ENCODE measurements at regions of chr15 and their contacts with region 1.

Region 1: DNA sequence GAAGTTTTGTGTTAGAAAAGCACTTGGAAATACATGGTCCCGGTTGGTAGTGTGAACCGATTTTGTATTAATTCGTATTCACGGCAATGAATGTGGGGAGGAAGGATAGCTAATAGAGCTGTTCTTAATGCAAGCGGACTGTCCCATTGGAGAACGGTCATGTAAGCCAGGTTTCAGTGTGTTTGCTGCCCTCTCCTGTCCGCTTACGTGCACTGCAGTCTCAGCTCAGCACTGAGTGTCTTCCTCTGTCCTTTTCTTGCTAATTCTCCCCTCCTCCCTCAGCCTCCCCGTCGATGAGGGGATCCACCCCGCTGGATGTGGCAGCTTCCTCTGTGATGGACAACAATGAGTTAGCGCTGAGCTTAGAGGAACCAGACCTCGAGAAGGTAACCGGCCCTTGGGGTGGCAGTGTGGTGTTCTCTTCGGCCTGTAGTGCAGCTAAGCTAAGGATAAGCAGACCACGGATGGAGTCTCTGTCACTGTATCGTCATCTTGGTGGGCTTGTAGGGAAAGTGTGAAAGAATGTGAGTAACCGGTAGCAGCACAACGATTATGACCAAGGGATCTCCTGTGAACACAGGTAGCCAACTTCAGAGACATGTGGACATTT is 267.5 kb upstream of the CHRM5 start:
- DNase-seq: peak; percentile 59 to 75 (median 71)
- ATAC-seq: peak; percentile 98
- H3K4me3 ChIP-seq: no peak overlapping the region
- H3K27ac ChIP-seq: no peak overlapping the region
- H3K4me1 ChIP-seq: no peaks in the 10 kb centered on the region
- H3K27me3 ChIP-seq: peaks cover 0 to 4% of the 10 kb centered on the region in 2 experiments; a peak in 3 of 5 replicates
- CTCF ChIP-seq: peak; percentile 83 to 92 (median 86)
- EP300 ChIP-seq: no peak
- POLR2A ChIP-seq: no peak
- RAD21 ChIP-seq: peak; percentile 71 to 83

Region 2: GRCh38 chr15:33086507-33087121 is 614.2 kb before region 1 on chr15:
- CTCF ChIA-PET with region 1: interaction called, 5 read pairs
- POLR2A ChIA-PET with region 1: no interaction called
- in situ Hi-C with region 1: no loop called
- intact Hi-C with region 1: loop called (anchors 2 kb)
- DNase-seq: peak in 2 of 4 experiments; percentile 11 to 43
- ATAC-seq: peak; percentile 75
- H3K4me3 ChIP-seq: no peak overlapping the region
- H3K27ac ChIP-seq: no peak overlapping the region
- H3K4me1 ChIP-seq: no peaks in the 10 kb centered on the region
- H3K27me3 ChIP-seq: peaks cover 0 to 2% of the 10 kb centered on the region in 2 experiments; a peak in 1 of 5 replicates
- CTCF ChIP-seq: peak; percentile 9 to 62 (median 36); a peak in 4 of 6 replicates
- EP300 ChIP-seq: no peak
- POLR2A ChIP-seq: no peak
- RAD21 ChIP-seq: peak in 1 of 2 experiments; percentile 59; a peak in 3 of 4 replicates

Region 3: DNA sequence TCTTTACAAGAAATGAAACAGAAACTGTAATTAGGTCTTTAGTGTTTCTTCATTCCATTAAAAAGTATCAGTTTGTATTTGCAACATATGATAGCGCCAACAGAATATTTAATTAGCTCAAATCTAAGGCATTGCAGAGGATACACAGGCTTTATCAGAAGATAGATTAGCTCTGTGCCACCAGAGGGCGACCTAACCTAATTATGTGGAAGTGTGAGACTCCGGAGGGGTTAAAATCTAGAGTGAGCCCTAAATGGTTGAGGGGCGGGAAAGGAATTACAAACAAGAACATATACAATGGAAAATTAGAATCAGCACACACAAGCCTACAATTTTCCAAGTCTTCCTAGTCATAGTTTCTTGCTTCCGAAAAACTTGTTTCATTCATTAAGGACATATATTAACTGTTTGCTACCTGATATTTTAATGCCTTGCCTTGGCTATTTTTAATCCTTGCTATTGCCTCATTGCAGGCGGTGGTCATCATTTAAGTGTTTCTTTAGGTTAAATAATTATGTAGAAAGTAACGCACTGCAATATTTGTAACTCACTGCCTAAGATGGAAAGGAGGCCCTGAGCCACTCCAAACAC is 408.0 kb before region 1 on chr15:
- CTCF ChIA-PET with region 1: interaction called, 8 read pairs
- POLR2A ChIA-PET with region 1: interaction called, 3 read pairs
- in situ Hi-C with region 1: loop called (anchors 5 kb)
- intact Hi-C with region 1: loop called (anchors 1 kb)
- DNase-seq: peak; percentile 47 to 64 (median 50)
- ATAC-seq: peak; percentile 89
- H3K4me3 ChIP-seq: no peak overlapping the region
- H3K27ac ChIP-seq: no peak overlapping the region
- H3K4me1 ChIP-seq: no peaks in the 10 kb centered on the region
- H3K27me3 ChIP-seq: peaks cover 2 to 7% of the 10 kb centered on the region in 2 experiments; a peak in 2 of 5 replicates
- CTCF ChIP-seq: peak; percentile 64 to 76 (median 68)
- EP300 ChIP-seq: no peak
- POLR2A ChIP-seq: no peak
- RAD21 ChIP-seq: peak; percentile 74 to 81

Region 4: GRCh38 chr15:33600212-33600611 is 100.6 kb before region 1 on chr15:
- CTCF ChIA-PET with region 1: no interaction called
- POLR2A ChIA-PET with region 1: no interaction called
- in situ Hi-C with region 1: no loop called
- intact Hi-C with region 1: no loop called
- DNase-seq: no peak
- ATAC-seq: no peak
- H3K4me3 ChIP-seq: no peak overlapping the region
- H3K27ac ChIP-seq: no peak overlapping the region
- H3K4me1 ChIP-seq: no peaks in the 10 kb centered on the region
- H3K27me3 ChIP-seq: peaks cover 0 to 4% of the 10 kb centered on the region in 2 experiments; a peak in 1 of 5 replicates
- CTCF ChIP-seq: no peak
- EP300 ChIP-seq: no peak
- POLR2A ChIP-seq: no peak
- RAD21 ChIP-seq: no peak

Region 5: DNA sequence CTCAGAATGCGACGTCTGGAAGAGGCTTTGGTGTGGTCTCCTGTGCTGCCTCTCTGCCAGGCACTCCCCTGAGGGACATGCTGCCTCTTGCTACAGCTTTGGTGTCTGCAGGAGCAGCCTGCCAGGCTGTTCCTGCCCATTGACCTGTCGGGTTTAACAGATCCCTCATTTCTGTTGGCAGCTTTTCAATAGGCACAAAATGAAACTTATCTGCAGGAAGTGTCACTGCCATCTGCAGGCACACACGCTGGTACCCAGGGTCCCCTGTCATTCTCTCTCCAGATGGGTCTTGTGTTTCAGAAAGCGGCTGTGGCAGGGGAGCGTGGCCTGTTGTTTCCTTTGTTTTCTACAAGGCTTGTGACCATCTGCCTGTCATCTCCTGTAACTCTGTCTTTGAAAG is 60.8 kb before region 1 on chr15:
- CTCF ChIA-PET with region 1: no interaction called
- POLR2A ChIA-PET with region 1: no interaction called
- in situ Hi-C with region 1: no loop called
- intact Hi-C with region 1: loop called (anchors 10 kb)
- DNase-seq: no peak
- ATAC-seq: no peak
- H3K4me3 ChIP-seq: no peak overlapping the region
- H3K27ac ChIP-seq: no peak overlapping the region
- H3K4me1 ChIP-seq: no peaks in the 10 kb centered on the region
- H3K27me3 ChIP-seq: peaks cover 0 to 10% of the 10 kb centered on the region in 2 experiments; a peak in 3 of 5 replicates
- CTCF ChIP-seq: no peak
- EP300 ChIP-seq: no peak
- POLR2A ChIP-seq: no peak
- RAD21 ChIP-seq: no peak